Colonic mucosa (tissue), 4 donors: ENCODE measurements at regions of chr13 and their contacts with region 1.

Region 1: DNA sequence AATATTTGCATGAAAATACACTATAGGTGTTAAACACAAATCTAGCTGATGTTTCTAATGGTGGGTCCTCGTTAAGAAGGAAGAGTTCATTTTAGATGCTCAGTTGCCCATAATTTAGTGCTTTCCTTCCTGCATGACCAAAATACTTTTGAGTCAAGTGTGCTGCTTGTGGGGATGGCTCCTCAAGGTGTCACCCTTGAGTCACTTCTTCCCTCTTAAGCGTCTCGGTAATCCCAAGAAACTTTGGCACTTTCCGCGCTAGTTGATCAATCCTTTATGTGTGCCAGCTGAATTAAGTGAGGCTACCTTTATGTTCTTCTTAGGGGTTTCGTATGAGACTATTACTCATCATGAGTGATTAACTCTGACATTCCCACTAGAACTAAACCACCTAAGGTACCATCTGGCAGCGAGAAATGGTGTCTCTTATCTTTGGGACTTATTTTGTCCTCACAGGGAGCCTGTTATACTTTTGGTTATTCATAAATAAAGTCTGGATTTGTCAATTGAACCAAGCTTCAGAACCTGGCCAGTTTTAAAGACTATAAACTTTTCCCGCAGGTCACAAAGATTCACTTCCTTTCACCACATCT is 106.8 kb downstream of the NHLRC3 start:
- DNase-seq: peak; percentile 52
- H3K4me3 ChIP-seq: no peak overlapping the region
- H3K27ac ChIP-seq: no peak overlapping the region
- H3K4me1 ChIP-seq: no peaks in the 10 kb centered on the region
- H3K27me3 ChIP-seq: no peaks in the 10 kb centered on the region
- CTCF ChIP-seq: peak; percentile 52

Region 2: DNA sequence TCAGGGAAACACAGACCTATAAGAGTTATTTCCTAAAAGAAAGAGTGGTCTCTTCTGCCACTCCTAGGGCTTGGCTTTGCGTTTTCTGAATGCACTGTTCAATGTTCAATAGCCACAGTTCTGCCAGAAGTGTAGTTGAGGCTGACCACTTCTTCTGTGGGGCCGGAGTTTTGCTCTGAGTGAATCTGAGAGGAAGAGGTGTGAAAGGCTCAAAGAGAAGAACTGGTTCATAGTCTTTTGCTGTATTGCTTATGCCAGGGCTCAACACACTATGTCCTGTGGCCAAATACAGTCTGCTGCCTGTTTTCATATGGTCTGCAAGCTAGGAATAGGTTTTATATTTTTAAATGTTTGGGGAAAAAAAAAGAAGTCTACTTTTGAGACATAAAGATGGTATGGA is 282.6 kb before region 1 on chr13:
- intact Hi-C with region 1: no loop called
- DNase-seq: no peak
- H3K4me3 ChIP-seq: no peak overlapping the region
- H3K27ac ChIP-seq: no peak overlapping the region
- H3K4me1 ChIP-seq: no peaks in the 10 kb centered on the region
- H3K27me3 ChIP-seq: no peaks in the 10 kb centered on the region
- CTCF ChIP-seq: no peak

Region 3: GRCh38 chr13:39263033-39263432 is 118.0 kb after region 1 on chr13:
- intact Hi-C with region 1: loop called (anchors 10 kb)
- DNase-seq: peak; percentile 54
- H3K4me3 ChIP-seq: no peak overlapping the region
- H3K27ac ChIP-seq: no peak overlapping the region
- H3K4me1 ChIP-seq: no peaks in the 10 kb centered on the region
- H3K27me3 ChIP-seq: no peaks in the 10 kb centered on the region
- CTCF ChIP-seq: peak; percentile 52